ENCODE measurements at regions of chr7 and their contacts with region 1.

Region 1: GRCh38 chr7:149854611-149855360 is 16.6 kb downstream of the ZNF862 start:
- DNase-seq: peak; percentile 81
- H3K4me3 ChIP-seq: no peak overlapping the region
- H3K27ac ChIP-seq: peak overlapping the region; percentile 36; a peak in 3 of 4 replicates
- H3K4me1 ChIP-seq: peaks cover 19 to 21% of the 10 kb centered on the region in 2 experiments
- H3K27me3 ChIP-seq: no peaks in the 10 kb centered on the region
- CTCF ChIP-seq: no peak
- EP300 ChIP-seq: no peak
- RAD21 ChIP-seq: no peak; the same call in 1 of the 2 replicates

Region 2: DNA sequence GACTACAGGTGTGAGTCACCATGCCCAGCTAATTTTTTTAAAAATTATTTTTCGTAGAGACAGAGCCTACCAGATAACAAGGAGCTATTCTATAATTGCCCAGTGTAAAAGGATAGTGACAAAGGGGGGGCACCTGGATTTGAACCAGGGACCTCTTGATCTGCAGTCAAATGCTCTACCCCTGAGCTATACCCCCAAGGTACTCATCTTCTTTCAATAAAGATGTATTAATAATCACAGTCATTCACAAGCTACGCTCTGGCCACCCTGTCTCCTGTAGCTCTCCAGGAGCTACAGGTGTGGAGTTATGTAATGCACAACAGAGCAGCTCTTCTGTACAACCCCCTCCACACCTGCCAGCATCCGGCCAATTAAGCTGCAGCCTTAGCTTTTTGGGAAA is 477.4 kb before region 1 on chr7:
- CTCF ChIA-PET with region 1: no interaction called
- POLR2A ChIA-PET with region 1: no interaction called
- DNase-seq: no peak
- H3K4me3 ChIP-seq: no peak overlapping the region
- H3K27ac ChIP-seq: no peak overlapping the region
- H3K4me1 ChIP-seq: no peaks in the 10 kb centered on the region
- H3K27me3 ChIP-seq: no peaks in the 10 kb centered on the region
- CTCF ChIP-seq: no peak
- EP300 ChIP-seq: no peak
- RAD21 ChIP-seq: no peak

Region 3: DNA sequence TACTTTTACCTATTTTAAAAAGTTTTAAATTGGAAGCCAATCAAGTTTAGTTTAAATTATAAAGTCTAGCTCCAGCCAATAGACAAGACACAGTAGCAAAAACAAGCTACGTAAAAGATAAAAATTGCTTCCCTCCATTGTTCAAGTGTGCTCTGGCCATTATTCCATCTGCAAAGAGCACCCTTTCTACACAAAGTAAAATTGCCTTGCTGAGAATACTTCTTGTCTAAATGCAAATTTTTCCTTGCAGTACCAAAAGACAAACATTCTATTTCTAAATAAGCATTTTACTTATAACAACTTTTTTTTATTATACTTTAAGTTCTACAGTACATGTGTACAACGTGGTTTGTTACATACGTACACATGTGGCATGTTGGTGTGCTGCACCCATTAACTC is 281.3 kb before region 1 on chr7:
- CTCF ChIA-PET with region 1: no interaction called
- POLR2A ChIA-PET with region 1: no interaction called
- DNase-seq: no peak
- H3K4me3 ChIP-seq: no peak overlapping the region
- H3K27ac ChIP-seq: no peak overlapping the region
- H3K4me1 ChIP-seq: no peaks in the 10 kb centered on the region
- H3K27me3 ChIP-seq: no peaks in the 10 kb centered on the region
- CTCF ChIP-seq: no peak
- EP300 ChIP-seq: no peak
- RAD21 ChIP-seq: no peak

Region 4: DNA sequence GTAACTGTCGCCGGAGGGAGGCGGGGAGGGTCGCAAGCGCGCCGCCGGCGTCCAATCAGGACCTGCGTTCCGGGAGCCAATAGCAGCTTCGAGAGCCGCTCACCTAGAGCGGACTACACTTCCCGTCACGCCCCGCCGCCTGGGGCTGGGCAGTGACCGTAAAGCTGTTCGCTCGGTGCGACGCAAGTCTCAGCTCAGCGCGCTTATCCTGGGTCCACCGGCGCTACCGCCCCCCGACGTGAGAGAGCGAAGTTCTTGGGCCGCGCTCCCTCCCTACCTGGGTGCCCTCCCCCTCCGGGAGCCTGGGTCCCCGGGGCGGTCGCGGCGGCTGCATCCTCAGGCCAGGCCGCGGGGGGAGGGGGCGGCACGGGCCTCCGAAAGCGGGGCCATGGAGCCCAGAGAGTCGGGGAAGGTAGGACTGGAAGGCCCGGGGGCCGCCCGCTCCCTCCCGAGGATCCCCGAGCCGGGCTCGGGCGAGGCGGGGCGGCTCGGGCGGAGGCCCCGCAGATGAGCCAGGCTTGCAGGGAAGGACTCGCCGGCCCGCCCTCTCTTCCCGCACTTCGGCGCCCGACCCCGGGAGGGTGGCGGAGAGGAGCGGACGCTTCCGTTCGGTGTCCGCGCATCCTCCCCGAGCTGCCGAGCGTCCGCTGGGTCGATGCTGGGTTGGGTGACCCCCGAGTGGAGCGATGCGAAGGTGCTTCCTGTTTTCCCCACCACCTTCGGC is 16.4 kb before region 1 on chr7 and contains the start of gene ZNF862:
- CTCF ChIA-PET with region 1: interaction called, 10 read pairs
- POLR2A ChIA-PET with region 1: interaction called, 3 read pairs
- DNase-seq: peak; percentile 100
- H3K4me3 ChIP-seq: peak within 1 kb of the TSS; percentile 73 to 87
- H3K27ac ChIP-seq: peak within 1 kb of the TSS; percentile 50 to 82
- H3K4me1 ChIP-seq: peaks cover 0 to 15% of the 10 kb centered on the region in 2 experiments; a peak in 2 of 4 replicates
- H3K27me3 ChIP-seq: 0 out of 2 replicates have a peak, but pooled peaks cover 18% of the 10 kb centered on the region
- CTCF ChIP-seq: no peak
- EP300 ChIP-seq: peak in 1 of 2 experiments; percentile 23; a peak in 2 of 4 replicates
- RAD21 ChIP-seq: peak; percentile 16; the same call in 1 of the 2 replicates
- polyA plus RNA-seq, gene ZNF862: 17.3 and 24.3 TPM in 2 replicates

Measured in SK-N-SH (cell line).